IMR-90 (cell line): ENCODE measurements at regions of chr3 and their contacts with region 1.

Region 1: DNA sequence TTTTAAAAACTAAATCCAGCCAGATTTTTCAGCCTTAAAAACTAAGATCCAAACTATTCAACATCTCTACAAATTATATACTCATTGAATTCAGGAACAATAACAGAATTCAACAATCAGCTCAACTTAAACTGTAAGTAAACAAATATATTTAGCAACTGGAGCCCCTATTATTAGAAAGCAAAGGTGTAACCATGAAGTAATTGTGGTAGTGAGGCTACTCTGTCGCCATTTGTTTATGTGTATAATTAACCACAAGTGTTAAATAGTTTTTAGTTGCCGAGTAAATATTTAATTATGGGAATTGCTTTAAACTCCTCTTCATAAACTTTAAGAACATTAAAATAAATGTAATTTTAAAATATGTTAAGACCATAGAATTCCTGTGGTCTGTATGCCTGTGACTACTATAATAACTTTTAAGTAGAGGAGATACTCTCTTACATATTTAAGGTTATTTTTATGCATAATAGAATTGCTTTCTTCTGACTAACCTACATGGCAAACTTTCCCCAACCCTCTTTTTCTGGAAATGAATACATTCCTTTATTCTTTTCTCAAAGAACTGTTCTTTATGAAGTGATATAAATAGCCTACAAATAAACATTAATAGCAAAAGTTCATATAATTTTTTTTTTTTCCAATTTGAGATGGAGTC is 51.2 kb downstream of the MFN1 start:
- DNase-seq: peak; percentile 71
- ATAC-seq: peak; percentile 71
- H3K4me3 ChIP-seq: no peak overlapping the region
- H3K27ac ChIP-seq: no peak overlapping the region
- H3K4me1 ChIP-seq: peaks cover 3% of the 10 kb centered on the region
- H3K27me3 ChIP-seq: no peaks in the 10 kb centered on the region
- CTCF ChIP-seq: no peak
- POLR2A ChIP-seq: no peak
- RAD21 ChIP-seq: no peak

Region 2: DNA sequence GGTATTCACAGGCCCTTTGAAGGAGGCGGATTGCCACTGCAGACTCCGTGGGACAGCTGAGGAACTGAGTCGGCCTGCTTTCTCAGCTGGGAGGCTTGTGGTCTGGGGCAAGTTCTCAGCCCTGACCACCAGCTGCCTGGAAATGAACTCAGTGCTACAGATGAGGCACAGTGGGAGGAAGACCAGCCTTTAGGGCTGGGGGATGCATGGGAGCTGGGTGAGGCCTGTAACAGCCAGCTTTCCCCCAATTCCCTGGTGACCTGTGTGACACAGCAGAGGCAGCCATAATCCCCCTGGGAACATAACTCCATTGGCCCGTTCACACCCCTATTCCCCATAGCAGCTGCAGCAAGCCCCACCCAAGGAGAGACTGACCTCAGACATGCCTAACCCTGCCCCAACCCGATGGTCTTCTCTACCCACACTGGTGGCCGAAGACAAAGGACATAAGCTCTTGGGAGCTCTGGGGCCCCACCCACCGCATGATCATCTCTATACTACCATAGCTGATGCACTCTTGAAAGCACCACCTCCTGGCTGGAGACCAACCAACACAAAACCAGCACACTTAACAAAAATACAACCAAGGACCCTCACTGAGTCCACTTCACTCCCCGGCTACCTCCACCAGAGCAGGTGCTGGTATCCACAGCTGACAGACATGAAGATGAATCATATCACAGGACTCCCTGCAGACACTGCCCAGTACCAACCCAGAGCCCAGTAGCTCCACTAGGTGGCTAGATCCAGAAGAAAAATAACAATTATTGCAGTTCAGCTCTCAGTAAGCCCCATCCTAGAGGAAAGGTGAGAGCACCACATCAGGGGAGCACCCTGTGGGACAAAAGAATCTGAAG is 352.0 kb before region 1 on chr3:
- CTCF ChIA-PET with region 1: no interaction called
- POLR2A ChIA-PET with region 1: no interaction called
- dilution Hi-C with region 1: no loop called
- in situ Hi-C with region 1: no loop called
- intact Hi-C with region 1: no loop called
- DNase-seq: peak; percentile 8
- ATAC-seq: no peak; the same call in 1 of the 2 replicates
- H3K4me3 ChIP-seq: no peak overlapping the region
- H3K27ac ChIP-seq: no peak overlapping the region
- H3K4me1 ChIP-seq: no peaks in the 10 kb centered on the region
- H3K27me3 ChIP-seq: no peaks in the 10 kb centered on the region
- CTCF ChIP-seq: no peak
- POLR2A ChIP-seq: no peak
- RAD21 ChIP-seq: no peak

Region 3: GRCh38 chr3:179706233-179706632 is 307.5 kb after region 1 on chr3:
- CTCF ChIA-PET with region 1: interaction called, 10 read pairs
- POLR2A ChIA-PET with region 1: no interaction called
- dilution Hi-C with region 1: no loop called
- in situ Hi-C with region 1: no loop called
- intact Hi-C with region 1: no loop called
- DNase-seq: peak; percentile 28
- ATAC-seq: peak; percentile 75
- H3K4me3 ChIP-seq: no peak overlapping the region
- H3K27ac ChIP-seq: no peak overlapping the region
- H3K4me1 ChIP-seq: peaks cover 4% of the 10 kb centered on the region; the same call in 1 of the 2 replicates
- H3K27me3 ChIP-seq: no peaks in the 10 kb centered on the region
- CTCF ChIP-seq: no peak
- POLR2A ChIP-seq: no peak
- RAD21 ChIP-seq: no peak